ENCODE measurements at regions of chr6 and their contacts with region 1.

Region 1: DNA sequence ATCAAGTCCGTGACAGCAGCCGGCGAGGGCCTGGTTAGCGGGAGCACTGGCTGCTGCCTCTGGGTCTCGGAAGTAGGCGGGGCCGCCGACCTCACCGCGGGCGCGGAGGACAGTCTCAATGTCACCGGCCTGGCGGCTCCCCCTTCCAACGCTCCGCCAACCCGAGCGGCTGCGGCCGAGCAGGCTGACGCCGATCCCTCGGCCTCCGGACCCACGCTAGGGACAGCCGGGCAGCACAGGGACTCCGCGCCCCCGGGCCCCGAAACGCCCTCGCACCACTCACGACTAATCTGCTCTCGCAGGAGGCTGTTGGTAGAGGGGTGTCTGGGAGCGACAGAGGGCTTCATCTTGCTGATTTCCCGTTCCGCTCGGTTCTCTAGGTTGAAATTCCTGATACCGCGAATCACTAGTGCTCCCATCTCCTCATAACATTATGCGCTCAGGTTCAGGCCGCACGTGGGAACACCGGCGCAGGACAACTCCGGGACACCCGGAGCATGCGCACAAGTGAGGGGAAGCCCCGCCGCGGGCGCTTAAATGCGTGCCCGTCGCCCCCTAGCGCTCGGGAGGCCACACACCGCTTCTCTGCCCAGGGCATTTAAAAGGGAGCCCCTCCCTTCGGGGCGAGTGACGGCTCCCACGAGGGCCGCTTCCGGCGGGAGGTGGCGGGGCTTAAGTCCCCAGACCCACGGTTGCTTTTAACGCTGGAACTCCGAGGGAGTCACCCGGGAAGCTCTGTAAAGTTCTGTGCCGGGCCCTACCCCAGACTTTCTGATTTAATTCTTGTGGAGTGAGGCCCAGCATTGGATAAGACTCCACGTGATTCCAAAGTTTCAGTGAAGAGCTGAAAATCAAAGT is at the start of gene NDUFAF4:
- DNase-seq: peak; percentile 91 to 97 (median 95)
- ATAC-seq: peak; percentile 88 to 90
- H3K4me3 Mint-ChIP-seq: peak within 1 kb of the TSS; percentile 85 to 99 (median 95)
- H3K27ac Mint-ChIP-seq: peak within 1 kb of the TSS; percentile 87 to 99 (median 95)
- H3K4me1 Mint-ChIP-seq: peaks cover 11 to 44% (median 31%) of the 10 kb centered on the region in 4 donors
- H3K27me3 Mint-ChIP-seq: peaks cover 0 to 4% (median 0%) of the 10 kb centered on the region in 5 donors
- polyA plus RNA-seq, gene NDUFAF4: 70.7 to 95.2 (median 86.3) TPM

Region 2: DNA sequence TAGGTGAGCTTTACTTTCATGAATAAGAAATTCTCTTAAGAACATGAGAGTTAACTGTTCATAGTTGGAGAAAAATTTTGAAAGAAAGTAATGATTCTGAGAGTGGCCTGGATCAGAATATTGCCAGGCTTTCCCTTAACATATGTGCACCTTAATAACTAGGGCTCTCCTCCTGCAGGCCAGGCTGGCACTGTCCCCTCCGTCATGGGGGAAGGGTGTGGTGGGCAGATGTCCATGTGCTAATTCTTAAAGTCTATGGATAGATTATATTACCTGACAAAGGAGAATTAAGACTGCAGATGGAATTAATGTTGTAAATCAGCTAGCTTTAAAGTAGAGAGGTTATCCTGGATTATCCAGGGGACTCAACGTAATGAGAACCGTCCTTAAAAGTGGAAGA is 16.0 kb after region 1 on chr6:
- POLR2A ChIA-PET with region 1: no interaction called
- DNase-seq: no peak
- ATAC-seq: no peak
- H3K4me3 Mint-ChIP-seq: no peak overlapping the region
- H3K27ac Mint-ChIP-seq: no peak overlapping the region
- H3K4me1 Mint-ChIP-seq: peaks cover 0 to 6% (median 0%) of the 10 kb centered on the region in 4 donors
- H3K27me3 Mint-ChIP-seq: peaks cover 11 to 22% (median 19%) of the 10 kb centered on the region in 5 donors

Region 3: DNA sequence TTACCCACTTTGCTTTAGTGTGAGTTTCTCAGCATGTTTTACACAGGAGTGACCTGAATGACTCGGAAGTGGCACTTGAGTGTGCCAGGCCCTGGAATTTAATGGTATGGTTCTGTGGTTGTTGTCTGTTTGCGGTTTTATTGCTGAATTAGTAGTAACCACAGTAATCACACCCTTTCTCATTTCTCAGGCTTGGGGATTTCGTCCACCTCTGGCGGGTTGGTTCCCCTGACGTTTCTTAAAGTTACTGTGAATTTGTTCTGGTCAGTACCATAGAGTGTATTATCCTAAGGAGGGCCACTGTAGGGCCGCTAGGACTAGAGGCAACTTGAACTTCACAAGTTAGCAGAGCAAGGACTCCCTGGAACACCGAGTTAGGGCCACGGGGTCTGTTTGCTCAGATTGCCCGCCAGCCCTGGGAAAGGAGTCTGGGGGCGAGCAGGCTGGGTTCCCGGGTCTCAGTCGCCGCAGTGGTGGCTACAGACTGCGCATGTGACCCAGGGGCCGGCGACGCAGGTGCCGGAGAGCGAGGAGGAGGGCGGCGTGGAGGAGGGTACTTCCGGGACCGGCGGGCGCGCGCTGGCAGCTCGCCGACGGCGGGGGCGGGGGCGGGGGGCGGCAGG is 26.4 kb after region 1 on chr6:
- POLR2A ChIA-PET with region 1: interaction called, 44 read pairs
- DNase-seq: peak in 1 of 10 donors; percentile 10
- ATAC-seq: peak in 1 of 2 donors; percentile 64
- H3K4me3 Mint-ChIP-seq: peak overlapping the region; percentile 87 to 99 (median 96)
- H3K27ac Mint-ChIP-seq: peak overlapping the region; percentile 93 to 100 (median 98)
- H3K4me1 Mint-ChIP-seq: peaks cover 18 to 41% (median 34%) of the 10 kb centered on the region in 4 donors
- H3K27me3 Mint-ChIP-seq: peaks cover 0 to 2% (median 0%) of the 10 kb centered on the region in 5 donors

Measured in naive thymus-derived CD8-positive, alpha-beta T cell (primary cell).